K562 (cell line): ENCODE measurements at regions of chr13 and their contacts with region 1.

Region 1: DNA sequence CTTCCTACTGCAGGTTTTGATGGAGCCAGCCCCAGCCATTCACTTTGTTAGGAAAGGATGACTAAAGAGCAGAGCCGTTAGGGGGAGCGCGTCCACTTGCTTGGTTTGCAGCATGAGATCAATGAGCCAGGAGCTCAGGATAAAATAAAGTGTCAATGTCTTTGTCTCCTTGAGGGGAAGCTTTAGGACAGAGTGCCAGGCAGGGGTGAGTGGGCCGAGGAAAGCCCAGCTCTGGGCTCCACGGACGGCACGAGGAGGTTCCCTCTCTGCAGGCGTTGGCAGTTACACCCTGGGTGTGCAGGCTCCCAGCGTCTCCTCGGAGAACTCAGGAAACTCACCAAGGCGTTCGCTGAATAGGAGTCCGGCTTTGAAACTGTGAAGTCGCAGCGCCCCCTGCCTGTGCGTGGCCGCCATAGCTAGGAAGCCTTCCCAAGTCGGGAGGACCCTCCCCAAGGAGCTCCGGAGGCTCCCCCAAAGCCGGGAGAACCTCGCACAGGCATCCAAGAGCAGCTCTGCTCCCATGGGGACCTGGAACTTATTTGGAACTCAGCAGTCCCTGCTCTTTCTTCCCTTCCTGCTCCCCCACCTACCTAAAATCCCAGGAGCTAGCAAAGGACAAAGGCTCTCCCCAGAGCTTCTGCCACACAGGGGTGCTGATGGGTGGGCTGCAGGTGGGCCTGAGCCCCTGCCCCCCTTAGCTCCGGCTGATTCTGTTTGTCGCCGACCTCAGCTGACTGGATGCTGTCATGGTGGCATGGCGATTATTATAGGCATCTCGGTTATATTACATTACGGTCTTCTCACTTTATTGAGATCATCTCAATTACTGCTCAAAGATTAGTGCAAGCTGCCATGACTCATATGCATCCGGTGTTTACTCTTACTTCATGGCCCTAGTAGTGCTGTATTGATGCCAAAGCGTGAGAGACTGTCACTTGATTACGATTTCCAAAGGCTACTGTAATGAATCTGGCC is 34.4 kb downstream of the GSX1 start:
- DNase-seq: peak; percentile 68 to 78 (median 70)
- ATAC-seq: peak; percentile 93
- H3K4me3 ChIP-seq: no peak overlapping the region
- H3K27ac ChIP-seq: no peak overlapping the region
- H3K4me1 ChIP-seq: peaks cover 0 to 8% of the 10 kb centered on the region in 2 experiments; a peak in 2 of 5 replicates
- H3K27me3 ChIP-seq: no peaks in the 10 kb centered on the region; a peak in 1 of 5 replicates
- CTCF ChIP-seq: peak; percentile 79 to 83 (median 83)
- EP300 ChIP-seq: no peak
- POLR2A ChIP-seq: no peak
- RAD21 ChIP-seq: peak; percentile 80 to 85

Region 2: DNA sequence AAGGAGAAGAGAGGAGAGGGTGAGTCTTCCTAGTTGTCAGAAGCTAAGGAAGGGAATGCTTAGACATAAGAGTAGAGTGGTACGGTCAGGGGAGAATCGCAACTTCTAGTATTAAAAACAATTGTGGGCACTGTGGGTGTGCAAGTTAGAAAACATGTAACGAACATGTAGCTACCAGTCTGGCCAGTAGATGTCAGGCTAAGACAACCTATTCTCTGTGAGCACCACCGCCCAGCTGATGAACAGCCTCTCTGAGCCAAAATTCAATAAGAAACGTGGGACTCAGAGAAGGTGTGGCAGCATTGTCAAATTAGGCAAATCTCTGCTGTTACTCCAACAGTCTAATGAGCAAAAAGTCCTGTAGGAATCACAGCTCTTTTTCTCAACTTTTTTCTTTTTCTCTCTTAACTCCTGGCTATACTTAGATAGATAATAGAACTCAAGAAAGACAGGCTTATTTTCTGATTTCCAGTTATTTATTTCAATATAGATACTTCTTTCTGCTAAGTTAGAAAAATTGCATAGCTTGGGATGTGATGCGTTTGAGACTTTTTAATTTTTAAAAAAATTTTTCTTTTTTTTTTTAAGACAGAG is 841.3 kb before region 1 on chr13:
- CTCF ChIA-PET with region 1: interaction called, 5 read pairs
- POLR2A ChIA-PET with region 1: no interaction called
- in situ Hi-C with region 1: no loop called
- intact Hi-C with region 1: loop called (anchors 1 kb)
- DNase-seq: peak; percentile 53 to 81 (median 63)
- ATAC-seq: peak; percentile 68
- H3K4me3 ChIP-seq: no peak overlapping the region
- H3K27ac ChIP-seq: no peak overlapping the region
- H3K4me1 ChIP-seq: peaks cover 28 to 29% of the 10 kb centered on the region in 2 experiments
- H3K27me3 ChIP-seq: no peaks in the 10 kb centered on the region; a peak in 1 of 5 replicates
- CTCF ChIP-seq: peak; percentile 68 to 83 (median 76)
- EP300 ChIP-seq: no peak
- POLR2A ChIP-seq: no peak
- RAD21 ChIP-seq: peak; percentile 84 to 91

Region 3: GRCh38 chr13:27374650-27375049 is 452.0 kb before region 1 on chr13:
- CTCF ChIA-PET with region 1: interaction called, 16 read pairs
- POLR2A ChIA-PET with region 1: no interaction called
- in situ Hi-C with region 1: no loop called
- intact Hi-C with region 1: loop called (anchors 1 kb)
- DNase-seq: peak; percentile 64 to 77 (median 68)
- ATAC-seq: peak; percentile 98
- H3K4me3 ChIP-seq: no peak overlapping the region
- H3K27ac ChIP-seq: no peak overlapping the region
- H3K4me1 ChIP-seq: no peaks in the 10 kb centered on the region
- H3K27me3 ChIP-seq: peaks cover 11 to 35% of the 10 kb centered on the region in 2 experiments; a peak in 4 of 5 replicates
- CTCF ChIP-seq: peak; percentile 76 to 81 (median 78)
- EP300 ChIP-seq: no peak
- POLR2A ChIP-seq: no peak
- RAD21 ChIP-seq: peak; percentile 55 to 70

Region 4: GRCh38 chr13:27481766-27482165 is 344.9 kb before region 1 on chr13:
- CTCF ChIA-PET with region 1: interaction called, 3 read pairs
- POLR2A ChIA-PET with region 1: no interaction called
- in situ Hi-C with region 1: loop called (anchors 10 kb)
- intact Hi-C with region 1: loop called (anchors 2 kb)
- DNase-seq: peak; percentile 57 to 69 (median 64)
- ATAC-seq: peak; percentile 88
- H3K4me3 ChIP-seq: no peak overlapping the region
- H3K27ac ChIP-seq: no peak overlapping the region
- H3K4me1 ChIP-seq: no peaks in the 10 kb centered on the region; a peak in 3 of 5 replicates
- H3K27me3 ChIP-seq: peaks cover 4 to 5% of the 10 kb centered on the region in 2 experiments; a peak in 3 of 5 replicates
- CTCF ChIP-seq: peak; percentile 63 to 78 (median 66)
- EP300 ChIP-seq: no peak
- POLR2A ChIP-seq: no peak
- RAD21 ChIP-seq: peak in 1 of 2 experiments; percentile 66; a peak in 3 of 4 replicates

Region 5: DNA sequence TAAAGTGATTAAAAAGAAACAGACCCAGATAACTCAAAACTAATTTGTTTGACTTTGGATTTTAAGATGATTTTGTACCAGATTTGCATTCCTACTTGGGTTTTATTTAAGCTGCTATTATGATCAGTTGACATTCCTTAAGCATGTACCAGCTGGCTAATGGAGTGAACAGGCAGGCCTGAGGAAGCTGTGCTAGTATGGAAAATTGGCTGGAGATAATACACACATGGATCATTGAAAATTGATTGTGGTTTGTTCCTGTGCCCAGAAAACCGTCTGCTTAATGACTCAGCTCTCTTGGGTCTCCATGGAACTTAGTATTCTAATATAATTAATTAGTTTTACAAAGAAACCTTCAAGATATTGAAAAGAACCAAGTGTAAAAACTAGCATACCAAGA is 182.4 kb before region 1 on chr13:
- CTCF ChIA-PET with region 1: no interaction called
- POLR2A ChIA-PET with region 1: no interaction called
- in situ Hi-C with region 1: no loop called
- intact Hi-C with region 1: no loop called
- DNase-seq: no peak
- ATAC-seq: no peak
- H3K4me3 ChIP-seq: no peak overlapping the region
- H3K27ac ChIP-seq: no peak overlapping the region
- H3K4me1 ChIP-seq: peaks cover 0 to 12% of the 10 kb centered on the region in 2 experiments; a peak in 4 of 5 replicates
- H3K27me3 ChIP-seq: no peaks in the 10 kb centered on the region
- CTCF ChIP-seq: no peak
- EP300 ChIP-seq: no peak
- POLR2A ChIP-seq: no peak
- RAD21 ChIP-seq: no peak

Region 6: GRCh38 chr13:27665333-27665732 is 161.3 kb before region 1 on chr13:
- CTCF ChIA-PET with region 1: no interaction called
- POLR2A ChIA-PET with region 1: no interaction called
- in situ Hi-C with region 1: no loop called
- intact Hi-C with region 1: loop called (anchors 5 kb)
- DNase-seq: peak in 1 of 4 experiments; percentile 5
- ATAC-seq: no peak
- H3K4me3 ChIP-seq: no peak overlapping the region
- H3K27ac ChIP-seq: no peak overlapping the region
- H3K4me1 ChIP-seq: peaks cover 4 to 10% of the 10 kb centered on the region in 2 experiments; a peak in 4 of 5 replicates
- H3K27me3 ChIP-seq: no peaks in the 10 kb centered on the region
- CTCF ChIP-seq: peak in 1 of 3 experiments; percentile 38; a peak in 2 of 6 replicates
- EP300 ChIP-seq: no peak
- POLR2A ChIP-seq: no peak
- RAD21 ChIP-seq: peak; percentile 37 to 48; a peak in 3 of 4 replicates

Region 7: DNA sequence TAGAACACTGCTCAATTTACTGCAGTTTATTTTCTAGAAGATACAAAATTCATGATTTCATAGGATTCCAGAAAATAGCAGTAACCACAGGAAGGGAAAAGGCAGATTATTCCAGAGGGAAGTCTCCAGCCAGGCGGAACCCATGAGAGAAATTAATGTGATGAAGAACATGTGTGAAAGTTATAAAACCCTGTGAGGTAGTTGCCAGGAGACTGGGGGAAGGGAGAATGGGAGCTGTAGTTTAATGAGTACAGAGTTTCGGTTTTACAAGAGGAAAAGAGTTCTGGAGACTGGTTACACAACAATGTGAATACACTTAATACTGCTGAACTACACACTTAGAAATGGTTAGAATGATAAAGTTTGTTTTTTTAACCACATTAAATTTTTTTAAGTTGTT is 79.0 kb after region 1 on chr13:
- CTCF ChIA-PET with region 1: no interaction called
- POLR2A ChIA-PET with region 1: no interaction called
- in situ Hi-C with region 1: no loop called
- intact Hi-C with region 1: no loop called
- DNase-seq: no peak
- ATAC-seq: no peak
- H3K4me3 ChIP-seq: no peak overlapping the region
- H3K27ac ChIP-seq: no peak overlapping the region
- H3K4me1 ChIP-seq: no peaks in the 10 kb centered on the region
- H3K27me3 ChIP-seq: peaks cover 4 to 6% of the 10 kb centered on the region in 2 experiments; a peak in 4 of 5 replicates
- CTCF ChIP-seq: no peak
- EP300 ChIP-seq: no peak
- POLR2A ChIP-seq: no peak
- RAD21 ChIP-seq: no peak

Region 8: GRCh38 chr13:27953676-27954405 is 127.2 kb after region 1 on chr13:
- CTCF ChIA-PET with region 1: no interaction called
- POLR2A ChIA-PET with region 1: no interaction called
- in situ Hi-C with region 1: no loop called
- intact Hi-C with region 1: loop called (anchors 5 kb)
- DNase-seq: peak; percentile 55 to 66 (median 57)
- ATAC-seq: peak; percentile 99
- H3K4me3 ChIP-seq: no peak overlapping the region
- H3K27ac ChIP-seq: no peak overlapping the region
- H3K4me1 ChIP-seq: peaks cover 0 to 13% of the 10 kb centered on the region in 2 experiments; a peak in 2 of 5 replicates
- H3K27me3 ChIP-seq: peaks cover 2 to 9% of the 10 kb centered on the region in 2 experiments; a peak in 1 of 5 replicates
- CTCF ChIP-seq: peak; percentile 63 to 87 (median 68)
- EP300 ChIP-seq: no peak
- POLR2A ChIP-seq: no peak
- RAD21 ChIP-seq: peak; percentile 29 to 61; a peak in 3 of 4 replicates

Region 9: DNA sequence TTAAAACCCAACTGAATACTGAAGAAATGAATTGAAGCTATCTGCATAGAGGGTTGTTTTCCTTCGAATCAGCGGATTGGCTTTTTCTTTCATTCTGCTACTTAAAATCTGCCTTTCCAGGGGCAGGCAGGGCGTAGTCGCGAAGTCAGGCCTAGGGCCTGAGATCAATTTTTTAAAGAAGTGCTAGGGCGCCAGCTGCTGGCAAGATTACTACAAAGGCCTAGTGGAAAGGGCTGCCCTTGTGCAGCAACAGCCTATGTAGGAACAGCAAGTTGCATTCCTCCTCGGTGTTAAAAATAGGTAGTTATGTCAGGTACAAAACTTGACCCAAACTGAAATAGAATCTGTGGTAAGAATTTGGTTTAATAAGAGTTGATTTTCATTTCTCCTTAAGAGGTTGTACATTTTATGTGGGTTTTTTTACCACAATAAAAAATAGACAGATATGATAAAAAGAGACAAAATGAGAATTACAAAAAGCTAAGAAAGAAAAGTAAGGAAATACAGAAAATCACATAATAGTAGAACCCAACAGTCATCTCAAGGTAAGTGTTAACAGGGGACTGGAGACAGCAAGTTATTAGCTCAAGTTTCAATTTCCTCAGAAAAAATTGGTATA is 171.3 kb after region 1 on chr13:
- CTCF ChIA-PET with region 1: interaction called, 3 read pairs
- POLR2A ChIA-PET with region 1: no interaction called
- in situ Hi-C with region 1: loop called (anchors 5 kb)
- intact Hi-C with region 1: loop called (anchors 5 kb)
- DNase-seq: peak; percentile 17 to 68 (median 26)
- ATAC-seq: peak; percentile 97
- H3K4me3 ChIP-seq: no peak overlapping the region
- H3K27ac ChIP-seq: no peak overlapping the region
- H3K4me1 ChIP-seq: peaks cover 0 to 4% of the 10 kb centered on the region in 2 experiments; a peak in 1 of 5 replicates
- H3K27me3 ChIP-seq: peaks cover 0 to 12% of the 10 kb centered on the region in 2 experiments; a peak in 1 of 5 replicates
- CTCF ChIP-seq: peak; percentile 64 to 68 (median 65)
- EP300 ChIP-seq: no peak
- POLR2A ChIP-seq: no peak
- RAD21 ChIP-seq: peak; percentile 14 to 61; a peak in 2 of 4 replicates